ENCODE measurements at regions of chr22 and their contacts with region 1.

Region 1: GRCh38 chr22:32979606-32980005 is 78.6 kb downstream of the SYN3 start:
- DNase-seq: no peak
- H3K4me3 ChIP-seq: no peak overlapping the region
- H3K27ac ChIP-seq: no peak overlapping the region
- H3K4me1 ChIP-seq: no peaks in the 10 kb centered on the region
- H3K27me3 ChIP-seq: no peaks in the 10 kb centered on the region
- CTCF ChIP-seq: no peak
- POLR2A ChIP-seq: no peak

Region 2: DNA sequence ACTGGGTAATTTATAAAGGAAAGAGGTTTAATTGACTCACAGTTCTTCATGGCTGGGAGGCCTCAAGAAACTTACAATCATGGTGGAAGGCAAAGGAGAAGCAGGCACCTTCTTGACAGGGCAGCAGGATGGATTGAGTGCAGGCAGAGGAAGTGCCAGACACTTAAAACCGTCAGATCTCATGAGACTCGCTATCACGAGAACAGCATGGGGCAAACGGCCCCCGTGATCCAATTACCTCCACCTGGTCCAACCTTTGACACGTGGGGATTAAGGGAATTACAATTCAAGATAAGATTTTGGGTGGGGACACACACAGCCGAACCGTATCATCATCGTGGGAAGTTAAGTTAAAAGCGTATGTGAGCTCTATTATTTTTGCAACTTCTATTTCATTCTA is 150.0 kb after region 1 on chr22:
- intact Hi-C with region 1: no loop called
- DNase-seq: no peak
- H3K4me3 ChIP-seq: no peak overlapping the region
- H3K27ac ChIP-seq: no peak overlapping the region
- H3K4me1 ChIP-seq: no peaks in the 10 kb centered on the region
- H3K27me3 ChIP-seq: no peaks in the 10 kb centered on the region
- CTCF ChIP-seq: no peak
- POLR2A ChIP-seq: no peak

Region 3: DNA sequence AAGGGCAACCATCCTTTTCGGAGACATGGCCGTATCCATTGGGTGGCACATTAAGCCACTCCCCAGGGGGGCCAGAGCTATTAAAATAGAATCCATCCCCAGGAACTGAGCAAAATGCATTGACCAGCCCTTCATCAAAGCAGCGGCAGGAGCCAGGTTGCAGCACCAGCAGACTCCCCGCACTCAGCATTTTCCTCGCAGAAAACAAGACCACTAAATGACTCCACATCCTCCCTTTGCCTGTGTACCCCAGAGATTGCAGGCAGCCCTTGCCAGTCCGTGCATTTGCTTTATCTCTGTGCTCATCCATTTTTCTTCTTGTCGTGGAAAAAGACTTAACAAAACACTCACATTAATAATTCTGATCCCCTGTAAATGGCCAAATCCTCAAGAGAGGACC is 1085.1 kb after region 1 on chr22:
- intact Hi-C with region 1: loop called (anchors 5 kb)
- DNase-seq: no peak
- H3K4me3 ChIP-seq: no peak overlapping the region
- H3K27ac ChIP-seq: no peak overlapping the region
- H3K4me1 ChIP-seq: no peaks in the 10 kb centered on the region
- H3K27me3 ChIP-seq: no peaks in the 10 kb centered on the region
- CTCF ChIP-seq: no peak
- POLR2A ChIP-seq: no peak

Measured in vagina (tissue), 2 donors.